ENCODE measurements at regions of chrX and their contacts with region 1.

Region 1: DNA sequence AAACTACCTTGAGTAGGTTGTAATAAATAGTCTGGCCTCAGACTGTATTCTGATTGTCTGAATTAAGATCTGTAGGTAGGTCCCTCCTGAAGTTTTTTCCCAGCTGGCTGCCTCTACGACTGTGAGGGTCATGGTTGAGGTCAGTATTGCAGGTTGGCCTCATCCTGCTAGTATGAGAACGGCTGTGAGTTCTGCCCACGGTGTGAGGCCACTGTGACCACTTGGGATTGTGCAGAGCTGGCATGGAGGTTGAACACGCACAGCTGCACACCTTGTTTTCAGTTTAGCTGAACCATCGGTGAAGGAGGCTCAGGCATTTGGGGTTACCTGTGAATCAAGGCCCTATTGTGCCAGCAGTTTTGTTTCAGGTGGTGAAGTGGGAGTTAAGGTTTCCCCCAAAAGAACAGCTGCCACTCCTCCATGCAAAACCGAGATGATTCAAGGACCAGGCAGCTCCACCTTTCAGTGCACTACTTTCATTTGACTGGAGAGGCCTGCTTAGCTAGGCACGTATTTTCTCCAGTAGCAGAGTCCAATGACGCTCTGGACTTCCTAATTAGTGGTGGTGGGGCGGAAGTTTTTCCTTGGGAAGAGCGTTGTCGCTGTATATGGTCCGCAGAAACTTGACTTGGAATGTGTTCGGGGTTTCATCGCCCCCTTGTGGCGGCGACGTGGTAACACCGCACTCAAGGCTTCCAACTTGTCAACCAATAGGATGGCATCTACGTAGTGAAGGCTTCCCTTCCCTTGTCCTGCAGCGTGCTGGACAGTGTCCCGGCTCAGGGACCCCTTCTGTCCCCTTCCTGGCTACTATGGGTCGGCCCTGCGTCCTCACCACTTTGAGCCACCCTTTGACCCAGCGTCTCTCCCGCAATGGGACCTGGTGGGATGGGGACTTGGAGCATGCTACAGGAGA is 13.8 kb downstream of the CMC4 start:
- DNase-seq: peak; percentile 70
- ATAC-seq: peak; percentile 74
- H3K4me3 ChIP-seq: peak overlapping the region in 1 of 5 experiments; percentile 20
- H3K4me3 Mint-ChIP-seq: peak overlapping the region; percentile 32
- H3K27ac ChIP-seq: no peak overlapping the region
- H3K27ac Mint-ChIP-seq: peak overlapping the region; percentile 39
- H3K4me1 ChIP-seq: peaks cover 0 to 9% of the 10 kb centered on the region in 2 donors
- H3K4me1 Mint-ChIP-seq: peaks cover 9% of the 10 kb centered on the region
- H3K27me3 ChIP-seq: no peaks in the 10 kb centered on the region
- H3K27me3 Mint-ChIP-seq: no peaks in the 10 kb centered on the region
- CTCF ChIP-seq: peak; percentile 76

Region 2: GRCh38 chrX:154661170-154661569 is 396.0 kb before region 1 on chrX:
- CTCF ChIA-PET with region 1: no interaction called
- POLR2A ChIA-PET with region 1: no interaction called
- intact Hi-C with region 1: no loop called
- DNase-seq: peak; percentile 10
- ATAC-seq: no peak
- H3K4me3 ChIP-seq: no peak overlapping the region
- H3K4me3 Mint-ChIP-seq: peak overlapping the region; percentile 60
- H3K27ac ChIP-seq: peak overlapping the region in 1 of 2 donors; percentile 24
- H3K27ac Mint-ChIP-seq: no peak overlapping the region
- H3K4me1 ChIP-seq: peaks cover 7 to 20% of the 10 kb centered on the region in 2 donors
- H3K4me1 Mint-ChIP-seq: peaks cover 13% of the 10 kb centered on the region
- H3K27me3 ChIP-seq: no peaks in the 10 kb centered on the region
- H3K27me3 Mint-ChIP-seq: no peaks in the 10 kb centered on the region
- CTCF ChIP-seq: no peak

Region 3: GRCh38 chrX:154918060-154918483 is 139.1 kb before region 1 on chrX:
- CTCF ChIA-PET with region 1: interaction called, 22 read pairs
- POLR2A ChIA-PET with region 1: no interaction called
- intact Hi-C with region 1: loop called (anchors 5 kb)
- DNase-seq: peak; percentile 56
- ATAC-seq: no peak
- H3K4me3 ChIP-seq: peak overlapping the region in 3 of 5 experiments; percentile 6 to 37 (median 28)
- H3K4me3 Mint-ChIP-seq: peak overlapping the region; percentile 75
- H3K27ac ChIP-seq: no peak overlapping the region
- H3K27ac Mint-ChIP-seq: no peak overlapping the region
- H3K4me1 ChIP-seq: no peaks in the 10 kb centered on the region
- H3K4me1 Mint-ChIP-seq: no peaks in the 10 kb centered on the region
- H3K27me3 ChIP-seq: no peaks in the 10 kb centered on the region
- H3K27me3 Mint-ChIP-seq: peaks cover 12% of the 10 kb centered on the region
- CTCF ChIP-seq: peak; percentile 73

Region 4: GRCh38 chrX:154980330-154981096 is 76.6 kb before region 1 on chrX:
- CTCF ChIA-PET with region 1: interaction called, 26 read pairs
- POLR2A ChIA-PET with region 1: no interaction called
- intact Hi-C with region 1: loop called (anchors 1 kb)
- DNase-seq: peak; percentile 82
- ATAC-seq: peak; percentile 93
- H3K4me3 ChIP-seq: peak overlapping the region in 4 of 5 experiments; percentile 6 to 40 (median 22)
- H3K4me3 Mint-ChIP-seq: peak overlapping the region; percentile 79
- H3K27ac ChIP-seq: no peak overlapping the region
- H3K27ac Mint-ChIP-seq: no peak overlapping the region
- H3K4me1 ChIP-seq: peaks cover 0 to 9% of the 10 kb centered on the region in 2 donors
- H3K4me1 Mint-ChIP-seq: peaks cover 2% of the 10 kb centered on the region
- H3K27me3 ChIP-seq: no peaks in the 10 kb centered on the region
- H3K27me3 Mint-ChIP-seq: peaks cover 8% of the 10 kb centered on the region
- CTCF ChIP-seq: peak; percentile 72

Region 5: DNA sequence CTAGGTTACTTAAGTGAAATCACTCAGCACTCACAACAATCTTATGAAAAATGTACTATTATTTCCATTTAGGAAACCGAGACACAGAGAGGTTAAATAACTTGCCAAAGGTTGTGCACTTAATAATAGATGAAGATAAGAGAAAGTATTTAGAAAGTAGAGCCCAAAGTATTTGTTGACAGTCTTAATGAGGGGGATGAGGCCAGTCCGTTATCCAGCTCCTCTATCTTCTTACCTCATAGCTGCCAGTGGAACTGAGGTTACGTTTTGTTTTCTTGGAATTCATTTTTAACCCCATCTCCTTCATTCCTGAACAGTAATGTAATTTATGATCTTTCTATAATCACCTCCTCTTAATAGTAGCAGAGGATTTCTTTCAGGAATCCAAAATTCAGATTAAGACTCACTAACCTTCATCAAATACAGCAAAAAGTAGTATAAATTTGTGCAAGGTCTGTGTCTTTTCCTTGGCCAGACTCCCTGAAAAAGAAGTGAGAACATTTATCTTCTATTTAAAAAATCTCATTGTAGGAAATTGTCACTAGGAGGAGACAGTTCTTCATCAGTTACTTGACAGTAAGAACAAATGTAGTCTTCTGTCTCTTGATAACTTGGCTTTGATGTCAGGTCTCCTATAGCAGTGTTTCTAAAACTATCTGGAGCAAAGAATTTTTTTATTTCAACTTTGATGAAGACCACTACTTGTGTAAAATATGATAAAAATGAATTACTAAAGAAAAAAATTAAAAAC is 70.1 kb before region 1 on chrX:
- CTCF ChIA-PET with region 1: interaction called, 26 read pairs
- POLR2A ChIA-PET with region 1: no interaction called
- intact Hi-C with region 1: no loop called
- DNase-seq: no peak
- ATAC-seq: no peak
- H3K4me3 ChIP-seq: no peak overlapping the region
- H3K4me3 Mint-ChIP-seq: no peak overlapping the region
- H3K27ac ChIP-seq: no peak overlapping the region
- H3K27ac Mint-ChIP-seq: no peak overlapping the region
- H3K4me1 ChIP-seq: no peaks in the 10 kb centered on the region
- H3K4me1 Mint-ChIP-seq: no peaks in the 10 kb centered on the region
- H3K27me3 ChIP-seq: no peaks in the 10 kb centered on the region
- H3K27me3 Mint-ChIP-seq: no peaks in the 10 kb centered on the region
- CTCF ChIP-seq: no peak

Region 6: DNA sequence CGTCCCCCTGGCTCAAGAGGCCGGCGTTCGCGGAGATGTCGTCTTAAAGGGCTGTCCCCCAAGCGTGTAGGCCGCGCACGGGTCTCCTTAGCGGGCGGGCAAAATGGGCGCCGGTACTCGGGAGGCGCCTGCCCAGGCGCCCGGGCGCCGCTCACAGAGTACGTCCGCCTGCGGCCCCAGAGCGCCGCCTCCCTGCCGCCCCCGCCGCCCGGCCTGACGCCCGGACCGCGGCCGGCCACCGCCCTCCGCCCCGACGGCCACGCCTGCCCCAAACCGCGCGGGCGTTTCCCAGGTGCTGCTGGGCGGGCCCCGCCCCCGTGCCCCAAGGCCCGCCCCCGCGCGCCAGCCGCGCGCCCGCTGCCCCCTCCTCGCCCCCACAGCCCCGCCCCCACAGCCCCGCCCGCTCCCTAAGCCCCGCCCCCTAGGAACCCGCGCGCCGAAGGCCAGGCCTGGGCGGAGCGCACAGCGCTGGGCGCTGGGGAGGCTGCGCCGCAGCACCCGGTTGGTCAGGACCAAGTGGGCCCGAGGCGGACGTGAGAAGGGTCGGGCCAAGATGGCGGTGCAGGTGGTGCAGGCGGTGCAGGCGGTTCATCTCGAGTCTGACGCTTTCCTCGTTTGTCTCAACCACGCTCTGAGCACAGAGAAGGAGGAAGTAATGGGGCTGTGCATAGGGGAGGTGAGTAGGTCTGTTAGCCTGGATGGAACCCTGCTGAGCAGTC is 14.0 kb after region 1 on chrX and contains the starts of genes BRCC3, CMC4 and MTCP1:
- CTCF ChIA-PET with region 1: interaction called, 8 read pairs
- POLR2A ChIA-PET with region 1: no interaction called
- intact Hi-C with region 1: loop called (anchors 1 kb)
- DNase-seq: peak; percentile 88
- ATAC-seq: peak; percentile 84
- H3K4me3 ChIP-seq: peak within 1 kb of the TSS; percentile 62 to 81 (median 77)
- H3K4me3 Mint-ChIP-seq: peak within 1 kb of the TSS; percentile 94
- H3K27ac ChIP-seq: peak within 1 kb of the TSS; percentile 88 to 89
- H3K27ac Mint-ChIP-seq: peak within 1 kb of the TSS; percentile 95
- H3K4me1 ChIP-seq: peaks cover 17 to 34% of the 10 kb centered on the region in 2 donors
- H3K4me1 Mint-ChIP-seq: peaks cover 50% of the 10 kb centered on the region
- H3K27me3 ChIP-seq: no peaks in the 10 kb centered on the region
- H3K27me3 Mint-ChIP-seq: no peaks in the 10 kb centered on the region
- CTCF ChIP-seq: no peak
- total RNA-seq, gene BRCC3: 14.3 and 16.9 TPM in 2 replicates
- total RNA-seq, gene CMC4: 4.4 and 6.0 TPM in 2 replicates
- total RNA-seq, gene MTCP1: 13.4 and 20.3 TPM in 2 replicates